Dorsolateral prefrontal cortex (tissue), 120 donors: ENCODE measurements at regions of chr20 and their contacts with region 1.

Region 1: GRCh38 chr20:46638134-46638897 is 12.9 kb downstream of the SLC13A3 start:
- DNase-seq: peak in 8 of 10 donors; percentile 53 to 70 (median 60)
- H3K4me3 ChIP-seq: peak overlapping the region in 2 of 59 donors; percentile 4 to 20
- H3K27ac ChIP-seq: peak overlapping the region in 58 of 59 donors; percentile 16 to 96 (median 86)
- H3K27me3 ChIP-seq: no peaks in the 10 kb centered on the region
- CTCF ChIP-seq: peak in 2 of 56 donors; percentile 7 to 14

Region 2: GRCh38 chr20:46568570-46569129 is 69.7 kb before region 1 on chr20:
- intact Hi-C with region 1: loop called (anchors 5 kb)
- DNase-seq: peak; percentile 90 to 97 (median 93)
- H3K4me3 ChIP-seq: peak overlapping the region in 8 of 59 donors; percentile 4 to 25 (median 12)
- H3K27ac ChIP-seq: peak overlapping the region in 58 of 59 donors; percentile 52 to 100 (median 97)
- H3K27me3 ChIP-seq: no peaks in the 10 kb centered on the region
- CTCF ChIP-seq: peak in 10 of 56 donors; percentile 7 to 39 (median 22)

Region 3: DNA sequence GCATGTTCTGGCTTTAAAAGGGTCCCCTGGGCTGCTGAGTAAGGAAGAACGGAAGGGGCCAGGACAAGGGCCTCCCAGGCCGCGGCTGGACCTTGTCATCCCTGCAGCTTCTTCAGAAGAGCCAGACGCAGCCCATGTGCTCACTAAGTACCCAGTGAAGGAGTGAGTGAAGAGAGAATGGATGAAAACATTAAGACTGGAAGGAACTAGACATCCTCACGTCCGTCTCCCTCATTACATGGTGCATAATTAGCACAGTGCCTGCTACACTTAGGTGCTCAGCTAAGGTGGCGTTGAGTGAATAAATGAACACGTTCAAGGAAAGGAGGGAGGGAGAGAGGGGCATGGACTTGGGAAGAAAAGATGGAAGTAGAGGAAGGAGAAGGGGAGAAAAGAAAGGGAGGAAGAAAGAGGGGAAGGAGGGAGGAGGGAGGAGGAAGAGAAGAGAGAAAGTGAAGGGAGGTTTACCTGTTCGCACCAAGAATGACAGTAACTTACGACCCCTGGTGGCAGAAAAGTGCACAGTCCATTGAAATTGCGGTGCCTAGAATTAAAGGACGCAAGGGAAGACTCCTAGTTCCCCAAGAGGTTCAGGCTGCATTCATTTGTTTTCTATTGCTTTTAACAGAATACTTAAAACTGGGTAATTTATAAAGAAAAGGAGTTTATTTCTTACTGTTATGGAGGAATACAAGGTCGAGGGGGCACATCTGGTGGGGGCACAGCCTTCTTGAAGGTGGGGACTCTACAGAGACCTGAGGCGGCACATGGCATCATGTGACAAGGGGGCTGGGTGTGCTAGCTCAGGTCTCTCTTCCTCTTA is 42.9 kb after region 1 on chr20:
- intact Hi-C with region 1: loop called in 1 of 2 experiments (anchors 5 kb)
- DNase-seq: peak in 9 of 10 donors; percentile 44 to 87 (median 67)
- H3K4me3 ChIP-seq: no peak overlapping the region
- H3K27ac ChIP-seq: peak overlapping the region in 2 of 59 donors; percentile 8 to 38
- H3K27me3 ChIP-seq: no peaks in the 10 kb centered on the region
- CTCF ChIP-seq: peak; percentile 73 to 91 (median 85)